ENCODE measurements at regions of chr3 and their contacts with region 1.

Region 1: DNA sequence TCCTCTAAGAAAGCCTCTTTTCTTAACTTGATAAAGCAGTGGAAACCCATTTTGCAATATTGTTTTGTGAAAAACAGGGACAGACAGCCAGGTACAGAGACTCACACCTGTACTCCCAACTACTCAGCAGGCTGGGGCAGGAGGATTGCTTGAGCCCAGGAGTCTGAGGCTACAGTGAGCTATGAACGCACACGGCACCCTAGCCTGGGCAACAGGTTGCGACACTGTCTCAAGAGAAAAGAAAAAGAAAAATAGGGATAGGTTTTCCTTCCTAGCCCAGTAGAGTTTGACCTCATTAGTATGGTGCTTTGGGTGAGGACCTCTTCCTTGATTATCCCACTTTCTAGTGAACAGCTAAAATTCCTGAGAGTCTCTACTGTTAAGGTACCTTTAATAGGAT is 17.5 kb upstream of the YEATS2 start:
- DNase-seq: no peak
- ATAC-seq: no peak

Region 2: DNA sequence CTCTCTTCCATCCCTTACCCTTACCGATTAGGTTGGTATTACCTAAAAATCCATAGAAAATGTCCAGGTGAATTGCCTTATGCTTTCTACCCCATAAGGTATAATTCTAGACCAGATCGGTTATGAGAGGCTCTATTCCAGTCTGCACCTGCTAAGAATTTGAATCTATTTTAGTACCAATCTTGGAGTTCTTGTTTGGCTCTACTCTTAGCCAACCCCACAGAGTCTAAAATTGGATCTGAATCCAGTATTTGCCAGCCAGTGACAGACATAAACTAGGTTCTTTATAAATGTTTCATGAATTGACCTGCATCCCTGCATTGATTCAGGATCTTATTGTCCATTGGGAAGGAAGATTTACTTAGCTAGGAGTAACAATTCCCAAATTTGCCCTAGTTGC is 38.2 kb before region 1 on chr3:
- intact Hi-C with region 1: loop called (anchors 5 kb)
- DNase-seq: no peak
- ATAC-seq: peak; percentile 71

Measured in Right ventricle myocardium inferior (tissue), 1 donor.